Activated naive CD4-positive, alpha-beta T cell treated with anti-CD3 and anti-CD28 coated beads for 36 hours (primary cell): ENCODE measurements at regions of chr5 and their contacts with region 1.

Region 1: GRCh38 chr5:55021410-55021809 is 2.6 kb upstream of the GZMK start:
- DNase-seq: no peak
- H3K4me3 Mint-ChIP-seq: no peak overlapping the region
- H3K27ac Mint-ChIP-seq: no peak overlapping the region
- H3K4me1 Mint-ChIP-seq: peaks cover 41% of the 10 kb centered on the region
- H3K27me3 Mint-ChIP-seq: no peaks in the 10 kb centered on the region

Region 2: GRCh38 chr5:55062039-55062779 is 40.8 kb after region 1 on chr5:
- CTCF ChIA-PET with region 1: no interaction called
- intact Hi-C with region 1: loop called (anchors 1 kb)
- DNase-seq: peak; percentile 83
- H3K4me3 Mint-ChIP-seq: peak overlapping the region; percentile 51
- H3K27ac Mint-ChIP-seq: peak overlapping the region; percentile 46
- H3K4me1 Mint-ChIP-seq: peaks cover 41% of the 10 kb centered on the region
- H3K27me3 Mint-ChIP-seq: no peaks in the 10 kb centered on the region

Region 3: DNA sequence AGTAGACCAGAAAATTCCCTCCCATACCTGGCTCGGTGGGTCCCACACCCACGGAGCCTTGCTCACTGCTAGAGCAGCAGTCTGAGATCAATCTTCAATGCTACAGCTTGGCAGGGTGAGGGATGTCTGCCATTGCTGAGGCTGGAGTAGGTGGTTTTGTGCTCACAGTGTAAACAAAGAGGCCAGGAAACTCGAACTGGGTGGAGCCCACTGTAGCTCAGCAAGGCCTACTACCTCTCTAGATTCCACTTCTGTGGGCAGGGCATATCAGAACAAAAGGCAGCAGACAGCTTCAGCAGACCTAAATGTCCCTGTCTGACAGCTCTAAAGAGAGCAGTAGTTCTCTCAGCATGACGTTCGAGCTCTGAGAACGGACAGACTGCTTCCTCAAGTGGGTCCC is 75.5 kb after region 1 on chr5:
- CTCF ChIA-PET with region 1: no interaction called
- intact Hi-C with region 1: loop called (anchors 1 kb)
- DNase-seq: peak; percentile 33
- H3K4me3 Mint-ChIP-seq: no peak overlapping the region
- H3K27ac Mint-ChIP-seq: no peak overlapping the region
- H3K4me1 Mint-ChIP-seq: peaks cover 66% of the 10 kb centered on the region
- H3K27me3 Mint-ChIP-seq: peaks cover 6% of the 10 kb centered on the region

Region 4: GRCh38 chr5:55102348-55102747 is 80.9 kb after region 1 on chr5 and contains the start of gene GZMA:
- CTCF ChIA-PET with region 1: no interaction called
- intact Hi-C with region 1: loop called (anchors 1 kb)
- DNase-seq: peak; percentile 56
- H3K4me3 Mint-ChIP-seq: peak within 1 kb of the TSS; percentile 30
- H3K27ac Mint-ChIP-seq: no peak within 1 kb of the TSS
- H3K4me1 Mint-ChIP-seq: peaks cover 58% of the 10 kb centered on the region
- H3K27me3 Mint-ChIP-seq: peaks cover 9% of the 10 kb centered on the region
- total RNA-seq, gene GZMA: 0.24 TPM in 1 of 2 experiments, not detected in the other

Region 5: DNA sequence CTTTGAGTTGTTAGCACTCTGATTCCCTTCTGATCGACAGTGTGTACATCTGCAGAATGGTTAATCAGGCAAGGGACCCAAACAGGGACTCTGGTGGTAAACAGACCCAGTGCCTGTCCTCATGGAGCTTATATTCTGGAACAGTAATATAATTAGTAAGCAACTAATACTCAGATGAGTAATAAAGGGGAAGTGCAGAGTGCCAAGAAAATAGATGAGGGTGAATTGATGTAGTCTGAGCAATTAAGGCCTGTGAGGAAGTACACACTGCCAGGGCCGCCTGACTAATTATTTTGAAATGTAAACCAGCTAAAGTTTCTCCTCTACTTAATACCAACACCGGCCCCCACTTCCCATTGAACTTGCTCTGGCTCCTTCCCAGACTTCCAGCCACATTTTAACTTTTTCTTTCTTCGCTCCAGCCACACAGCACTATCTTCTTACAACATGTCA is 281.9 kb after region 1 on chr5:
- CTCF ChIA-PET with region 1: no interaction called
- intact Hi-C with region 1: no loop called
- DNase-seq: no peak
- H3K4me3 Mint-ChIP-seq: no peak overlapping the region
- H3K27ac Mint-ChIP-seq: no peak overlapping the region
- H3K4me1 Mint-ChIP-seq: peaks cover 14% of the 10 kb centered on the region
- H3K27me3 Mint-ChIP-seq: no peaks in the 10 kb centered on the region

Region 6: GRCh38 chr5:55850839-55851674 is 829.6 kb after region 1 on chr5 and contains the start of gene IL31RA:
- CTCF ChIA-PET with region 1: no interaction called
- intact Hi-C with region 1: loop called (anchors 10 kb)
- DNase-seq: no peak
- H3K4me3 Mint-ChIP-seq: no peak within 1 kb of the TSS
- H3K27ac Mint-ChIP-seq: no peak within 1 kb of the TSS
- H3K4me1 Mint-ChIP-seq: peaks cover 34% of the 10 kb centered on the region
- H3K27me3 Mint-ChIP-seq: no peaks in the 10 kb centered on the region
- total RNA-seq, gene IL31RA: 0.31 to 0.32 TPM